ENCODE measurements at regions of chr6 and their contacts with region 1.

Region 1: DNA sequence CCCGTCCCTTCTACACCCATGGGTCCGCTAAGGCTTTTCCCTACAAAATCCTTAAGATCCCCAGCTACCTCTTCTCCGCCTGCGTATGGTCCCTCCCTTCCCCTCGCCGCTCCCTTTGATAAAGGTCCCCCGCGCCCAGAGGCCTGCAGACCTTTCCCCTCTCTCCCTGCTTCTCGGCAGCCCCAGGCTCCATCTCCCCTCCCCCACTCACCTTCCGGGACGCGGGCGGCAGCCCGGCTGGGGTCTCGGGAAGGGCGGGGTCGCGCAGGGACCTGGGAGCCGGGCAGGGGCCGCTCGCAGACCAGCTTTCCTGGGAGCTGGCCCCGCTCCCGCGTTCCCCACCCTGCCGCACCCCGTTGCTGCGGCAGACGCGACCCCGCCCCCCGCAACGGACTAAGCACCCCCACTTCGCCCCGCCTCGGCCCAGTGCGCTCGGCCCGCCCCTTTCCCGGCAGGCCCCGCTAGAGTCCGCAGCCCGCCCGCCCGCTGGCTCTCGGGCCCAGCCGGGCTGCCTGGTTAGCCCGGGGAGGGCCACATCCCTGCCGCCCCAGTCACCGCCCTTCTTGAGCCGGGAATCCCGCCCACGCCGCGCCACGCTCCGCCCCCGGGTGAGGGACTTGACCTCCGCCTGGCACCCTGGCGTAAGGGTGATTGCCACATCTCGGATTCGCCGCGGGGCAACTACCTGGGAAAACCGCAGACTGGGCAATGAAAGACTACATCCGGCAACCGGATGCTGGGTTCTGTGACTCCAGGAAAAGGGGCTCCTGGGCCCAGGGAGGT is at the start of gene FLOT1:
- DNase-seq: peak; percentile 85 to 100 (median 96)
- ATAC-seq: peak; percentile 89
- H3K4me3 ChIP-seq: peak within 1 kb of the TSS; percentile 66 to 94
- H3K27ac ChIP-seq: peak within 1 kb of the TSS; percentile 96 to 97
- H3K4me1 ChIP-seq: peaks cover 13 to 67% of the 10 kb centered on the region in 2 donors
- H3K27me3 ChIP-seq: no peaks in the 10 kb centered on the region
- CTCF ChIP-seq: no peak
- polyA plus RNA-seq, gene FLOT1: 115 to 135 (median 124) TPM

Region 2: GRCh38 chr6:30814136-30815040 is 71.9 kb after region 1 on chr6:
- intact Hi-C with region 1: loop called in 1 of 2 experiments (anchors 10 kb)
- DNase-seq: peak in 1 of 4 donors; percentile 65
- ATAC-seq: peak; percentile 62
- H3K4me3 ChIP-seq: peak overlapping the region in 1 of 2 donors; percentile 0
- H3K27ac ChIP-seq: peak overlapping the region; percentile 28 to 80
- H3K4me1 ChIP-seq: peaks cover 0 to 62% of the 10 kb centered on the region in 2 donors
- H3K27me3 ChIP-seq: no peaks in the 10 kb centered on the region
- CTCF ChIP-seq: no peak